ENCODE measurements at regions of chr2 and their contacts with region 1.

Region 1: DNA sequence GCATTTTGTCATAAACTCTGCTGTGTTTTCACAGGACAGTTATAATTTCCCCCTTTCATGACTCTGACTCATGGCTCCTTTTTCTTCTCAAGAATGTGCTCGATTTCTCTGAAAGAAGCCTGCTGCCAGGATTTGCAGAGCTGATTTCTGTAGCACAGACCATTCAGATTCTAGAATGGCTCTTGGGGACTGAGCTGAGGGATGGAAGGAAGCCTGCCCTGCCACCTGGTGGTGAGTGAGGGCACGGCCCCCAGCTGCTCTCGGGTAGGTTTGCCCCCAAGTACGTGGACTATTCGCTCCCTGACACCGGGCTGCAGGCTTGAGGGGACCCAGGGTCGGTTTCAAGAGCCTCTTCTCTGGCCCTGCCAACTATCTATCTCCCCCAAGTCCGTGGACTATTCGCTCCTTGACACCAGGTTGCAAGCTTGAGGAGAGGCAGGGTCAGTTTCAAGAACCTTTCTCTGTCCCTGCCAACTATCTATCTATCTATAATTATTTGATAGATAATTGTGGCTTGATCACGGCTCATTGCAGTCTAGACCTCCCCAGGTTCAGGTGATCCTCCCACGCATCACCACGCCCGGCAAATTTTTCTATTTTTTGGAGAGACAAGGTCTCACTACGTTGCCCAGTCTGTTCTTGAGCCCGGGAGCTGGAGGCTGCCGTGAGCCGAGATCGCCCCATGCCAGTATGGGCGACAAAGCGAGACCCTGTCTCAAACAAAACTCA is 1.4 kb upstream of the SMYD5 start:
- DNase-seq: peak; percentile 55
- H3K4me3 Mint-ChIP-seq: no peak overlapping the region
- H3K27ac Mint-ChIP-seq: no peak overlapping the region
- H3K4me1 Mint-ChIP-seq: peaks cover 31% of the 10 kb centered on the region
- H3K27me3 Mint-ChIP-seq: peaks cover 3% of the 10 kb centered on the region

Region 2: DNA sequence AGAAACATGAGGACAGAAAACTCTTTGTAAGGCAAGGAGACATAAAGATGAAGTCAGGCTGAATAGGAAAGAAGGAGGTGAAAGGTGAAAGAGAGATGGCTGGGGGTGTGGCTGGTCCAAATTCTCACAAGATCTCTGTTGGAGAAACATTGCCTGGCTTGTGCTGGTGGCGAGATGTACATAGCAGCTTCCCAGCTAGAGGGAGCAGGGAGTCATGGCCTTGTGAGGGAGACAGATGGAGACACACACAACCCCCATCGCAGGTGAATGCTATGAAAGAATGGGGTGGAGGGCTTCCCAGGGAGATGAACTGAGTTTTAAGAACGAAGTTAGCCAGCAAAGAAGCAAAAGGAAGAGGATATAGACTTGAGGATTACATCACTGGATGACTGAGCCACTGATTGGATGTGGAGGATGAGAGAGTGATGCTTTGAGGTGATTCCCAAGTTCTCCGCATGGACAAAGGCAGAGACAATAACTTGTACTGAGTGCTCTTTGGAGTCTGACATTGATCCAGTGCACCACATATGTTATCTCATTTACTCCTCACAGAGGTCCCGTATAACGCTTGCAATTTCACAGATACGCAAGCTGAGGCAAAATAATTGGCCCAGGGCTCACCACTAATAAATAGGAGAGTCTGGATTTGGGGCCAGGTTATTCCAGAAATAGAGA is 298.9 kb before region 1 on chr2:
- intact Hi-C with region 1: no loop called
- DNase-seq: no peak
- H3K4me3 Mint-ChIP-seq: no peak overlapping the region
- H3K27ac Mint-ChIP-seq: no peak overlapping the region
- H3K4me1 Mint-ChIP-seq: peaks cover 18% of the 10 kb centered on the region
- H3K27me3 Mint-ChIP-seq: peaks cover 74% of the 10 kb centered on the region

Region 3: DNA sequence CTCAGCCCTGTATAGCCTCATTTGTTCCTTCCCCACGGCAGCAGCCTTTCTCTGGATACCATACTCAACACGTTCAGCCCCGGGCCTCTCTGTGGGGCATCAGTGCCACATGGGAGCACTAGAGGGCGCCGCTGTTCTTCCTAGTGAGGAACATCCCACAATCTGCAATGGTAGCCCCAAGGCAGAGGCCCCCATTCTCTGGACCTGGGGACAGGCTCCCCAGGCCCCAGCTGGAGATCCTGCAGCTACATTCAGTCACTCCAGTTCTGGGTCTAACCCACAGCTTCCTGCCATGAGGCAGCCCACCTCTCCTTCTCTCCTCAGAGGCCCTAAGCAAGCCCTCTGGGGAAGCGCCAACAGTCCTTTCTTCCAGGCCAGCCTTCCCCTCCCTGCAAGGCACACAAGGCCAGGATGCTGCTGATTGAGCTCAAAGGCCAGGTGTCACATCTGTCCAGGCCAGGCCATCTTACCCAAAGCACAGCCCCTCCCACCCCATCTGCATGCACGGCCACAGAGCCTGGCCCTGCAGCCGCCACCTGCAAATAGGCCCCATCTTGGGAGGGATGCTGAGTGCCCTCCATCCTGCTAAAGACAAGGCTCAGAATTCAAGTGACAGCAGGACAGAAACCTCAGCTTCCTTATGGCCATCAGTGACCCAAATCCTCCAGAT is 126.8 kb before region 1 on chr2:
- intact Hi-C with region 1: loop called (anchors 1 kb)
- DNase-seq: peak; percentile 69
- H3K4me3 Mint-ChIP-seq: no peak overlapping the region
- H3K27ac Mint-ChIP-seq: no peak overlapping the region
- H3K4me1 Mint-ChIP-seq: no peaks in the 10 kb centered on the region
- H3K27me3 Mint-ChIP-seq: no peaks in the 10 kb centered on the region

Region 4: DNA sequence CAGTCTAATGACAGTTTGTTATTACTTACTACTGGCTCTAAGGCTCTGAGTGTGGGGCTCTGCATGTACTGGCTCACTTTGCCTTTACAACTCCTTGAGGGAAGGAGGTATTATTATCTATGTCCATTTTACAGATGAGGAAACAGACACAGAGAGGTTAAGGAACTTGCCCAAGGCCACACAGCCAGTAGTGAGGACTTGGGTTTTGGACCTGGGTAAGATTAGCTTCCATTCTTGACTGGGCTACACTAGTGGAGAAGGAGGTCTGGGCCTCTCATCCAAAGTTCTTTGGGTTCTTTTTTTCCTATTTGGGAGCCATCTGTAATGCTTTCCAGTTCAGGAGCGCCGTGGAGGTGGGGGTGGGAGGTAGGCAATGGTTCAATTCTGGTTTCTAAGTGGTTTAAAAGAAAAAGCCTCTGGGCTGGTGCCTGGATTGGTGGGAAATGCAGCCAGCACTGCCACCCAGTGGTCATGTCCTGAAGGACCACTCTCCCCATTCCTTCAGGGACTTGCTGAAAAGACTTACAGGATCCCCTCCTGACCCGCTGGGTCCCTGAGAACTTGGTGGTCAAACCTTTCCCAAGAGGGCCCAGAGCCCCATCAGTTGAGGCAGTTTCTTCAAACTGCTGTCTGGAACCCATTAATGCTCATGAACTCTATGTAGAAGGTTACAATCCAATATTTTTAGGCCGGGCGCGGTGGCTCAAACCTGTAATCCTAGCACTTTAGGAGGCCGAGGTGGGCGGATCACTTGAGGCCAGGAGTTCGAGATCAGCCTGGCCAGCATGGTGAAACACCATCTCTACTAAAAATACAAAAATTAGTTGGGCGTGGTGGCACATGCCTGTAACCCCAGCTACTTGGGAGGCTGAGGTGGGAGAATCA is 48.9 kb before region 1 on chr2:
- intact Hi-C with region 1: loop called (anchors 1 kb)
- DNase-seq: peak; percentile 37
- H3K4me3 Mint-ChIP-seq: no peak overlapping the region
- H3K27ac Mint-ChIP-seq: no peak overlapping the region
- H3K4me1 Mint-ChIP-seq: no peaks in the 10 kb centered on the region
- H3K27me3 Mint-ChIP-seq: peaks cover 9% of the 10 kb centered on the region

Region 5: DNA sequence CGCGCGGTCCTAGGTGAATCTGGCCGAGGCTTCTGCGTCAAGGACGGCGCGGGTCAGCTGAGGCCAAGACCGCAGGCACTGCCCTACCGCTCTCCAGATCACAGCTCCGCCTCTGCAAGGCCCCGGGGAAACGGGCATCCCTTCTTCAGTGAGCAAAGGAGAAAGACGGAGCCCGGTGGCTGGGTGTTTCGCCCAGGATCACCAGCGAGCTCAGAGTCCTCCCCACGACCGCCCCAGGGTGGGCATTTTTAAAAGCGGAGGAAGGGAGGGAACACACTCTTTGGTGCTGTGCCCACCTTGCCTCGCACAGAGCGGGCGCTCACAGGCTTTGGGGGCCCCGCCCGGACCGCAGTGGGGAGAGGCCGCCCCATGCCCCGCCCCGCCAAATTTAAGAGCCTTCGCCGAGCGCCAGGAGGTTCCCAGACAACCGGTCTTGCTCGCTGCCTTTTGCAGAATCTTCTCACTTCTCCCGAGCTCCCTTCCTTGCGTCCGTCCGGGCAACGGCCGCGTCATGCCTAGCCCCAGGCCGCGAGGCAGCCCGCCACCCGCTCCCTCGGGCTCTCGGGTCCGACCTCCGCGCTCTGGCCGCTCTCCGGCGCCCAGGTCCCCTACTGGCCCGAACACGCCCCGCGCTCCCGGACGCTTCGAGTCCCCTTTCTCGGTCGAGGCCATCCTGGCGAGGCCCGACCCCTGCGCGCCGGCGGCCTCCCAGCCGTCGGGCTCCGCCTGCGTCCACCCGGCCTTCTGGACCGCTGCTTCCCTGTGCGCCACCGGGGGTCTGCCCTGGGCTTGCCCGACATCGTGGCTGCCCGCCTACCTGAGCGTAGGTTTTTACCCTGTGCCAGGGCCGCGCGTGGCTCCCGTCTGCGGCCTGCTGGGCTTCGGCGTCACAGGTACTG is 10.2 kb before region 1 on chr2 and contains the start of gene NOTO:
- intact Hi-C with region 1: no loop called
- DNase-seq: no peak
- H3K4me3 Mint-ChIP-seq: peak within 1 kb of the TSS; percentile 49
- H3K27ac Mint-ChIP-seq: no peak within 1 kb of the TSS
- H3K4me1 Mint-ChIP-seq: no peaks in the 10 kb centered on the region
- H3K27me3 Mint-ChIP-seq: peaks cover 59% of the 10 kb centered on the region
- total RNA-seq, gene NOTO: not detected in 2 replicates

Region 6: DNA sequence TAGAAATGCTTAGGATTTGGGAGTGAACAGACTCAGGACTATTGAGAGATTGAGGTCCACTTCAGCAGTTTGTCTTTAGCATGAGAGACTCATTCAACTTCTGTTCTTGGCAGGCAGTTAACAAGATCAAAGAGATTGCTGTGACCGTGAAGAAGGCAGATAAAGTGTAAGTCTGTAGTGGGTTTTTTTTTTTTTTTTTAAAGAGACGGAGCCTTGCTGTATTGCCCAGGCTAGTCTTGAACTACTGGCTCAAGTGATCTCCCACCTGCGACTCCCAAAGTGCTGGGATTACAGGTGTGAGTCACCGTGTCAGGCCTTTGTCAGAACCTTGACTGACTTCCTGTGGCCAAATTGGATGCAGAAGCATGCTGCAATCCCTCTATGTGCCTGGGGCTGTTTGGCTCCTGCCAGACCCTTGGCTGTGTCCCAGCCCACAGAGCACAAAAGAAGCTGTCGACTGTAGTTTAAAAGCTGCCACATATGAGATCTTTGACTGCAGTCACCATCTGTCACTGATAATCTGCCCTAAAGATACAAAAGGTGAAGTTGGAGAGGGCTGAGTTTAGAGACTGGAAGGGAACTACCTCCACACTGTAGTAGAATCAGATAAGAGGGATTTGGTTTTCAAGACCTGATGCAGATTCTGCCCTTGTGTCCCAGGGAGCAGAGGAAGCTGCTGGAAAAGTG is 31.4 kb after region 1 on chr2:
- intact Hi-C with region 1: no loop called
- DNase-seq: no peak
- H3K4me3 Mint-ChIP-seq: no peak overlapping the region
- H3K27ac Mint-ChIP-seq: peak overlapping the region; percentile 40
- H3K4me1 Mint-ChIP-seq: peaks cover 32% of the 10 kb centered on the region
- H3K27me3 Mint-ChIP-seq: no peaks in the 10 kb centered on the region

Region 7: DNA sequence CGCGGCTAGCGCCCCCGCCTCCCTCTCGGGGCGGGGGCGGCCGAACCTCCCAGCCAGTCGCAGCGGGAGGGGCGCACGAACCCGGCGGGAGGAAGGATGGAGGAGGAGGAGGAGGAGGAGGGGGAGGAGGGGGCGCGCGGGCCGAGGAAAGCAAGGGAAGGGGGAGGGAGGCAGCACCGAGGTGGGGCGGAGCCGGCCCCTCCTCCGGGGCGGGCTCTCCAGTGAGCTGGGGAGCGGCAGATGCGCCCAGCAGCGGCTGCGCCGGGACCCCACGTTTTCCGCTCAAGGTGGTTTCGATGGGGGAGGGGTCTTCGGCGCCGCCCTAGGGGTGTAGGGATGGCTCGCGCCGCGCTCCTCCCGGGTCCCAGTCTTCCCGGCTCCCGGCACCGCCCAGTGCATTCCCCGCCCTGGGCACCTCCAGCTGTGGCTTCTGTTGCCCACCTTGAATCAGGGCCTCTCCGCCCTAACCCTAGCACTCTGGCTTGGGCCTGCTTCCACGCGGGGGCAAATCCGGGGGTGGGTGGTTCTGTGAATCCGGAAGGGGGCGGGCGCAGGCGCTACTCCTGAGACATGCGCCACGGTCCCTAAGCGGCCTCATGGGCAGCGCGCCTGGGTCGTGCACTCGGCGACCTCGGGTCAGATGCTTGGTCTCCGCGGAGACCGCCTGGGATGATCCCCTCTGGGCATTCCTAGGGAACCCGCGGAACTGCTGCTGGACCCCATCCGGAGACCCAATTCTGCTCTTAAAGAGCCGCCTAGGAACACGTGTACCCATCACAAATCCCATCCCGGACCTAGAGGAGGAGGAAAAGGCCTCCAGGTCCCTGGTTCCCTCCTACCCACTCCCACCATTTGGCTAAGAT is 71.9 kb after region 1 on chr2 and contains the start of gene FBXO41:
- intact Hi-C with region 1: loop called (anchors 1 kb)
- DNase-seq: peak; percentile 68
- H3K4me3 Mint-ChIP-seq: peak within 1 kb of the TSS; percentile 84
- H3K27ac Mint-ChIP-seq: peak within 1 kb of the TSS; percentile 57
- H3K4me1 Mint-ChIP-seq: peaks cover 18% of the 10 kb centered on the region
- H3K27me3 Mint-ChIP-seq: peaks cover 15% of the 10 kb centered on the region
- total RNA-seq, gene FBXO41: 29.3 and 30.9 TPM in 2 replicates

Region 8: GRCh38 chr2:73385595-73386341 is 173.2 kb after region 1 on chr2 and contains the start of gene ALMS1:
- intact Hi-C with region 1: loop called (anchors 1 kb)
- DNase-seq: peak; percentile 88
- H3K4me3 Mint-ChIP-seq: peak within 1 kb of the TSS; percentile 92
- H3K27ac Mint-ChIP-seq: peak within 1 kb of the TSS; percentile 90
- H3K4me1 Mint-ChIP-seq: peaks cover 37% of the 10 kb centered on the region
- H3K27me3 Mint-ChIP-seq: no peaks in the 10 kb centered on the region
- total RNA-seq, gene ALMS1: 18.2 and 19.4 TPM in 2 replicates